ENCODE measurements at regions of chr11 and their contacts with region 1.

Region 1: GRCh38 chr11:121582296-121582695 is 129.5 kb upstream of the SORL1-AS1 start:
- DNase-seq: peak; percentile 24
- H3K4me3 Mint-ChIP-seq: no peak overlapping the region
- H3K27ac Mint-ChIP-seq: peak overlapping the region; percentile 69
- H3K4me1 Mint-ChIP-seq: peaks cover 38% of the 10 kb centered on the region
- H3K27me3 Mint-ChIP-seq: no peaks in the 10 kb centered on the region

Region 2: DNA sequence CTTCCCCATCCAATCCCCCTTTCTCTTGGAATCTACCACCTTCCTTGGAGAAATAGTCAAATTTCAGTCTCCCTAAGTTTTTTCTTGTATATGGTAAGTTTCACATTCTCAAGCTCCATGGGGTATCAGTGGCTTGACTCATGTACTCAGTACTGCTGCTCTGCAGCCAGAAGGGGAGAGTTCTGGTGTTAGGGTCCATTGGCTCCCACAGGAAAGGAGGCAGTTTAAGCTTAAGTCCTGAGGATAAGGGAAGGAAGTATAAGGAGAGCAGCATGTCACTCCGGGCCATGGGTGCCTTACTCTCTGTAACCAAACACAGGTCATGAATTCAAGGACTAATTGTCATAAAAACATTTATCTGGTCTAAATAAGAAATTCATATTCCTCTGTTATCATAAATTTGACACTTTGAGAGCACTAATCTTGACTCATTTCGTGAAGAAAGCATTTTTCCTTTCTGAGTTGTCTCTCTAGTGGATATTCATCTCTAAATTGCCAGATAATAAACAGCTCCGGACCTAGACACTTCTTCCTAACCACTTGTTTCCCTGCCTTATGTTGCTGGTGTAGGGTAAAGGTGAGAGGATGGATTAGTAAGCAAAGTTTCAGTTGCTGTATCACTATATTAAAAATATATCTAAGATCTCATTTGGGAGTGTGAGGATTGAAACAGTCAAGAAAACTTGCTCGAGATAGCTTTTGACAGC is 150.3 kb before region 1 on chr11:
- CTCF ChIA-PET with region 1: interaction called, 8 read pairs
- POLR2A ChIA-PET with region 1: interaction called, 5 read pairs
- intact Hi-C with region 1: loop called (anchors 1 kb)
- DNase-seq: no peak
- H3K4me3 Mint-ChIP-seq: no peak overlapping the region
- H3K27ac Mint-ChIP-seq: peak overlapping the region; percentile 30
- H3K4me1 Mint-ChIP-seq: peaks cover 38% of the 10 kb centered on the region
- H3K27me3 Mint-ChIP-seq: no peaks in the 10 kb centered on the region

Region 3: GRCh38 chr11:121534131-121535093 is 47.9 kb before region 1 on chr11:
- CTCF ChIA-PET with region 1: no interaction called
- POLR2A ChIA-PET with region 1: no interaction called
- intact Hi-C with region 1: loop called (anchors 5 kb)
- DNase-seq: no peak
- H3K4me3 Mint-ChIP-seq: no peak overlapping the region
- H3K27ac Mint-ChIP-seq: no peak overlapping the region
- H3K4me1 Mint-ChIP-seq: peaks cover 51% of the 10 kb centered on the region
- H3K27me3 Mint-ChIP-seq: no peaks in the 10 kb centered on the region

Region 4: GRCh38 chr11:121563900-121564822 is 18.1 kb before region 1 on chr11:
- CTCF ChIA-PET with region 1: no interaction called
- POLR2A ChIA-PET with region 1: no interaction called
- intact Hi-C with region 1: loop called (anchors 1 kb)
- DNase-seq: no peak
- H3K4me3 Mint-ChIP-seq: no peak overlapping the region
- H3K27ac Mint-ChIP-seq: no peak overlapping the region
- H3K4me1 Mint-ChIP-seq: peaks cover 50% of the 10 kb centered on the region
- H3K27me3 Mint-ChIP-seq: no peaks in the 10 kb centered on the region

Region 5: DNA sequence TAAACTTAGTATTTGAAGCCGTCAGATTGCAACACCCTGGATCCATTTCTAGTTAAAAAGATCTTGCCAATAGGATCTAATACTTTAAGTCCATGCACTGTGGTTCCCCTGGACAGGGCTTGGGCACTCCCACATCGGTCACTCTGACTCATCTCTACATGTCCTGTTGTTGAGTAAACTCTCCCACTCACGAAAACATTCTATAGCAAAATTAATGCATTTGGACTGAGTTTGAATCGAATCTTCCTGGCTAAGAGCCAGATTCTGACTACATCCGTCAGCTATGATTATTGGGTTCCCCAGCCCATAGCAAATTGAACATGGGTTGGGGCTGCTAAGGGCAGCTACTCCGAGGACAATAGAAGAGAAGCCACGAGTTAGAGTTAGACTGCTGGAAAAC is 52.6 kb after region 1 on chr11:
- CTCF ChIA-PET with region 1: no interaction called
- POLR2A ChIA-PET with region 1: no interaction called
- intact Hi-C with region 1: no loop called
- DNase-seq: no peak
- H3K4me3 Mint-ChIP-seq: no peak overlapping the region
- H3K27ac Mint-ChIP-seq: no peak overlapping the region
- H3K4me1 Mint-ChIP-seq: no peaks in the 10 kb centered on the region
- H3K27me3 Mint-ChIP-seq: no peaks in the 10 kb centered on the region